Activated CD4-positive, alpha-beta T cell treated with anti-CD3 and anti-CD28 coated beads, Interleukin-2, amount 10 ng/mL, durations not matched to agents 24 days and 14 days (primary cell): ENCODE measurements at regions of chr4 and their contacts with region 1.

Region 1: GRCh38 chr4:112636688-112637551 is at the starts of genes LARP7 and ZGRF1:
- DNase-seq: peak; percentile 99
- H3K4me3 Mint-ChIP-seq: no peak within 1 kb of the TSS
- H3K27ac Mint-ChIP-seq: no peak within 1 kb of the TSS
- H3K4me1 Mint-ChIP-seq: peaks cover 29% of the 10 kb centered on the region
- H3K27me3 Mint-ChIP-seq: no peaks in the 10 kb centered on the region
- total RNA-seq, gene LARP7: 47.6 and 48.5 TPM in 2 replicates
- total RNA-seq, gene ZGRF1: 32.4 and 37.0 TPM in 2 replicates

Region 2: GRCh38 chr4:112327965-112328733 is 308.8 kb before region 1 on chr4:
- intact Hi-C with region 1: loop called (anchors 10 kb)
- DNase-seq: peak; percentile 64
- H3K4me3 Mint-ChIP-seq: no peak overlapping the region
- H3K27ac Mint-ChIP-seq: no peak overlapping the region
- H3K4me1 Mint-ChIP-seq: no peaks in the 10 kb centered on the region
- H3K27me3 Mint-ChIP-seq: no peaks in the 10 kb centered on the region

Region 3: DNA sequence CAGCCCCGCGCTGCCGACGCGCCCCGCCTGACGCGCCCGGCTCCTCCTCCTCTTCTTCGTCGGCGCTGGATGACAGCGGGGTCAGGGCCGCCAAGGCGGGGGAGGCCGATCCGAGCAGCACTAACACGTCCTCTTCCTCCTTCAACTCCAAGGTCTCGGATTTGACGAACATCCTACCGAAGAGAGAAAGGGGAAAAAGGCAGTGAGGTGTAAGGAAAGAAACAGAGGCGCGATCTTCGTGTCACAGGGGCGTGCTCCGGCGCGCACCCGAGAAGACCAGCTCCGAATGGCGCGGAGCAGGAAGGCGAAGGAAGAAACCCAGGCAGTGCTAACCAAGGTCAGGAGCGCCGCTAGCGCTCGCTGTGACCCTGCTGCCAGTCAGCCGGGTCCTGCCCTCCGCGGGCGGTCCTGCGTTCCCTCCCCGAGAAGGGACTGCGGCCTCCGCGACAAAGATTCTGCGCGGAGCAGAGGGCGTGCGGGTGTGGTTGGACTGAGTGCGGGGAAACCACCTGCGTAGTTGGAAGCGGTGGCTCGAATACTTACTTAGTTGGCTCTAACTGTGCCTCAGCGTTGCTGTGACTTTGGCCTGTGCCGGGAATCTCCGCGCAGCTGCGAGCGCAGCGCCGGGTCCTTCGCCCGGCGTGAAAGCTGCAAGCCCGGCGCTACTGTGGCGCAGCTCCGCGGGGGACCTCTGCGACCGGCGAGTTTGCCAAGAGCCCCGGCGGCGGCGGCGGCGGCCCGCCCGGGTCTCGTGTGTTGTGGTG is 121.4 kb before region 1 on chr4:
- intact Hi-C with region 1: loop called (anchors 5 kb)
- DNase-seq: peak; percentile 86
- H3K4me3 Mint-ChIP-seq: peak overlapping the region; percentile 90
- H3K27ac Mint-ChIP-seq: peak overlapping the region; percentile 84
- H3K4me1 Mint-ChIP-seq: peaks cover 50% of the 10 kb centered on the region
- H3K27me3 Mint-ChIP-seq: peaks cover 84% of the 10 kb centered on the region

Region 4: GRCh38 chr4:112546476-112546875 is 90.4 kb before region 1 on chr4:
- intact Hi-C with region 1: no loop called
- DNase-seq: no peak
- H3K4me3 Mint-ChIP-seq: no peak overlapping the region
- H3K27ac Mint-ChIP-seq: no peak overlapping the region
- H3K4me1 Mint-ChIP-seq: no peaks in the 10 kb centered on the region
- H3K27me3 Mint-ChIP-seq: no peaks in the 10 kb centered on the region

Region 5: GRCh38 chr4:112704991-112705845 is 68.3 kb after region 1 on chr4:
- intact Hi-C with region 1: loop called (anchors 1 kb)
- DNase-seq: peak; percentile 63
- H3K4me3 Mint-ChIP-seq: peak overlapping the region; percentile 79
- H3K27ac Mint-ChIP-seq: peak overlapping the region; percentile 52
- H3K4me1 Mint-ChIP-seq: peaks cover 16% of the 10 kb centered on the region
- H3K27me3 Mint-ChIP-seq: peaks cover 54% of the 10 kb centered on the region

Region 6: DNA sequence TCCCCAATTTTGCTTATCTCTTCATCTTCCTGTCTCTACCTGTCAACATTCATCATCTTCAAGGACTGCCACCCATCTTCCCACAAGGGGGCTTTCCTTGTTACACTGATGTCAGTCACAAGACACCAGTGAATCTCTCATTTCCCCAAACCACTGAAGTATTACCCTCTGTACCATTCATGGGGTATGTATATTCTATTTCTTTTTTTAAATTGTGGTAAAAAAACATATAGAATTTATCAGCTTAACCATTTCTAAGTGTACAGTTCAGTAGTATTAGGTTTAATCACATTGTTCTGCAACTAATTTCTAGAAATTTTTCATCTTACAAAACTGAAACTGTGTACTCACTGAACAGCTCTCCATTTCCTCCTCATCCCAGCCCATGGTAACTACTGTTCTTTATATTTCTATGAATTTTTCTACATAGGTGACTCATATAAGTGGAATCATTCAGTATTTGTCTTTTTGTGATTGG is 98.6 kb after region 1 on chr4:
- intact Hi-C with region 1: loop called (anchors 1 kb)
- DNase-seq: peak; percentile 65
- H3K4me3 Mint-ChIP-seq: no peak overlapping the region
- H3K27ac Mint-ChIP-seq: peak overlapping the region; percentile 57
- H3K4me1 Mint-ChIP-seq: peaks cover 14% of the 10 kb centered on the region
- H3K27me3 Mint-ChIP-seq: no peaks in the 10 kb centered on the region

Region 7: GRCh38 chr4:112765317-112765975 is 128.5 kb after region 1 on chr4:
- intact Hi-C with region 1: loop called (anchors 1 kb)
- DNase-seq: no peak
- H3K4me3 Mint-ChIP-seq: no peak overlapping the region
- H3K27ac Mint-ChIP-seq: no peak overlapping the region
- H3K4me1 Mint-ChIP-seq: peaks cover 2% of the 10 kb centered on the region
- H3K27me3 Mint-ChIP-seq: no peaks in the 10 kb centered on the region

Region 8: DNA sequence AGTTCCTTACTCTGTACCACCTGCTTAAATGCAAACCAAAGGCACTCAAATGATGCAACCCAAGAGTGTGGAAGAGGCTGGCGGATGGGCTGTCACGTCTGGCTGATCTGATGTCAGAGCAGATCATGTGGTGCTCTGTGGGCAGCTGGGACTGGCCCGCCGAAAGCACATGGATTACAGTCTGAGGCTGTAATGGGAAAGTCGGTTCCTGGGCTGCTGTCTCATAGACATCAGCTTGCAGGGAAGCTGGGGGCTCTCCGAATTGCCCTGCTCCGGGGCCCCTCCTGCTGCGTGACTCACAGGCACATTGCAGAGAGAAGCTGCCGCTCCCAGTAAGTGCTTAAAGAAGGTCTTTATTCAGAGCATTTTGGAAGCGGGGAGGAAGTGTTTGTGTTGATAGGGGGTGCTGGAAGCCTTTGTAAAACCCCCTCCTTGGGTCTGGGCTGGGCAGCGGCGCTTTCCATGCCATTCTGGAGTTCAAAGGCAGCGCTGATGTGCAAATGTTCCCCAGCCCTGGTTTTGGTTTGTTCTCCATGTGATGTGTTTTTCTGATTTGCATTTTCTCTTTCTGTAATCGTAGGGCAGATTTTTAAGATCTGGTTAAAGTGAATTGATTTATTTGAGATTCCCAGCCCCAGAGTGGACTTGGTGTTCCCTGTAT is 181.1 kb after region 1 on chr4:
- intact Hi-C with region 1: loop called (anchors 1 kb)
- DNase-seq: peak; percentile 83
- H3K4me3 Mint-ChIP-seq: peak overlapping the region; percentile 87
- H3K27ac Mint-ChIP-seq: peak overlapping the region; percentile 90
- H3K4me1 Mint-ChIP-seq: peaks cover 18% of the 10 kb centered on the region
- H3K27me3 Mint-ChIP-seq: peaks cover 16% of the 10 kb centered on the region